ENCODE measurements at regions of chr1 and their contacts with region 1.

Region 1: GRCh38 chr1:77683160-77684148 is 996 bp upstream of the ZZZ3 start:
- DNase-seq: peak; percentile 96
- ATAC-seq: peak; percentile 72
- H3K4me3 Mint-ChIP-seq: peak overlapping the region; percentile 98
- H3K27ac Mint-ChIP-seq: peak overlapping the region; percentile 95
- H3K4me1 Mint-ChIP-seq: peaks cover 31% of the 10 kb centered on the region
- H3K27me3 Mint-ChIP-seq: no peaks in the 10 kb centered on the region

Region 2: GRCh38 chr1:75785983-75786853 is 1897.2 kb before region 1 on chr1 and contains the start of gene RABGGTB:
- CTCF ChIA-PET with region 1: no interaction called
- POLR2A ChIA-PET with region 1: no interaction called
- intact Hi-C with region 1: loop called in 1 of 2 experiments (anchors 5 kb)
- DNase-seq: peak; percentile 97
- ATAC-seq: peak; percentile 94
- H3K4me3 Mint-ChIP-seq: peak within 1 kb of the TSS; percentile 100
- H3K27ac Mint-ChIP-seq: peak within 1 kb of the TSS; percentile 99
- H3K4me1 Mint-ChIP-seq: peaks cover 30% of the 10 kb centered on the region
- H3K27me3 Mint-ChIP-seq: peaks cover 2% of the 10 kb centered on the region
- total RNA-seq, gene RABGGTB: 121 to 190 TPM

Region 3: GRCh38 chr1:77219166-77219887 is 464.1 kb before region 1 on chr1 and contains the start of gene PIGK:
- CTCF ChIA-PET with region 1: no interaction called
- POLR2A ChIA-PET with region 1: no interaction called
- intact Hi-C with region 1: loop called (anchors 1 to 2 kb)
- DNase-seq: peak; percentile 94
- ATAC-seq: peak; percentile 93
- H3K4me3 Mint-ChIP-seq: peak within 1 kb of the TSS; percentile 92
- H3K27ac Mint-ChIP-seq: peak within 1 kb of the TSS; percentile 92
- H3K4me1 Mint-ChIP-seq: peaks cover 38% of the 10 kb centered on the region
- H3K27me3 Mint-ChIP-seq: no peaks in the 10 kb centered on the region
- total RNA-seq, gene PIGK: 19.3 to 19.7 TPM

Region 4: GRCh38 chr1:77428068-77428467 is 255.4 kb before region 1 on chr1:
- CTCF ChIA-PET with region 1: no interaction called
- POLR2A ChIA-PET with region 1: no interaction called
- intact Hi-C with region 1: loop called in 1 of 2 experiments (anchors 5 kb)
- DNase-seq: no peak
- ATAC-seq: no peak
- H3K4me3 Mint-ChIP-seq: no peak overlapping the region
- H3K27ac Mint-ChIP-seq: no peak overlapping the region
- H3K4me1 Mint-ChIP-seq: peaks cover 22% of the 10 kb centered on the region
- H3K27me3 Mint-ChIP-seq: no peaks in the 10 kb centered on the region

Region 5: DNA sequence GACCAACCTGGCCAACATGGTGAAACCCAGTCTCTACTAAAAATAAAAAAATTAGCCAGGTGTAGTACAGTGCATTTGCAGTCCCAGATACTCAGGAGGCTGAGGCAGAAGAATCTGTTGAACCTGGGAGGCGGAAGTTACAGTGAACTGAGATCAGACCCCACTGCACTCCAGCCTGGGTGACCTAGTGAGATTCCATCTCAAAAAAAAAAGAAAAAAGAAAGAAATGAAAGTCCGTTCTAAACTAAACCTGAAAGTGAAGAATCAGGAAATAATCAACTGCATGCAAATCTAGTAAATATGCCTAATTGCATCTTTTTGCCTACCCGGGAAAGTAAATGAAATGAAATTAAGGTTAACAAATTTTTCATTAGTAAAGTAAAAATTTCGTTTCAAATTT is 100.5 kb before region 1 on chr1:
- CTCF ChIA-PET with region 1: no interaction called
- POLR2A ChIA-PET with region 1: no interaction called
- intact Hi-C with region 1: loop called in 1 of 2 experiments (anchors 5 kb)
- DNase-seq: no peak
- ATAC-seq: no peak
- H3K4me3 Mint-ChIP-seq: no peak overlapping the region
- H3K27ac Mint-ChIP-seq: no peak overlapping the region
- H3K4me1 Mint-ChIP-seq: peaks cover 16% of the 10 kb centered on the region
- H3K27me3 Mint-ChIP-seq: no peaks in the 10 kb centered on the region

Region 6: DNA sequence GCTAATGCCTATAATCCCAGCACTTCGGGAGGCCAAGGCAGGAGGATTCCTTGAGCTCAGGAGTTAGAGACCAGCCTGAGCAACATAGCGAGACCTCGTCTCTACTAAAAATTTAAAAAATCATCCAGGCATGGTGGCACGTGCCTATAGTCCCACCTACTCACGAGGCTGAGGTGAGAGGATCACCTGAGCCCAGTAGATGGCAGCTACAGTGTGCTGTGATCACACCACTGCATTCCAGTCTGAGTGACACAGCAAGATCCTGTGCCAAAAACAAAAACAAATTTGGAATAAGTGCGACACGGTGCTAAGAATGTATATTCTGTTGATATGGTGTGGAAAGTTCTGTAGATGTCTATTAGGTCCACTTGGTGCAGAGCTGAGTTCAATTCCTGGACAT is 61.1 kb after region 1 on chr1:
- CTCF ChIA-PET with region 1: no interaction called
- POLR2A ChIA-PET with region 1: no interaction called
- intact Hi-C with region 1: no loop called
- DNase-seq: no peak
- ATAC-seq: no peak
- H3K4me3 Mint-ChIP-seq: no peak overlapping the region
- H3K27ac Mint-ChIP-seq: no peak overlapping the region
- H3K4me1 Mint-ChIP-seq: peaks cover 49% of the 10 kb centered on the region
- H3K27me3 Mint-ChIP-seq: no peaks in the 10 kb centered on the region

Region 7: GRCh38 chr1:77978969-77979876 is 295.8 kb after region 1 on chr1 and contains the start of gene FUBP1:
- CTCF ChIA-PET with region 1: no interaction called
- POLR2A ChIA-PET with region 1: interaction called, 8 read pairs
- intact Hi-C with region 1: loop called (anchors 1 kb)
- DNase-seq: peak; percentile 97
- ATAC-seq: peak; percentile 81
- H3K4me3 Mint-ChIP-seq: no peak within 1 kb of the TSS
- H3K27ac Mint-ChIP-seq: no peak within 1 kb of the TSS
- H3K4me1 Mint-ChIP-seq: peaks cover 47% of the 10 kb centered on the region
- H3K27me3 Mint-ChIP-seq: no peaks in the 10 kb centered on the region
- total RNA-seq, gene FUBP1: 240 to 258 TPM

Measured in activated CD4-positive, alpha-beta T cell treated with anti-CD3 and anti-CD28 coated beads for 36 hours (primary cell).